Gastrocnemius medialis (tissue), 4 donors: ENCODE measurements at regions of chr4 and their contacts with region 1.

Region 1: DNA sequence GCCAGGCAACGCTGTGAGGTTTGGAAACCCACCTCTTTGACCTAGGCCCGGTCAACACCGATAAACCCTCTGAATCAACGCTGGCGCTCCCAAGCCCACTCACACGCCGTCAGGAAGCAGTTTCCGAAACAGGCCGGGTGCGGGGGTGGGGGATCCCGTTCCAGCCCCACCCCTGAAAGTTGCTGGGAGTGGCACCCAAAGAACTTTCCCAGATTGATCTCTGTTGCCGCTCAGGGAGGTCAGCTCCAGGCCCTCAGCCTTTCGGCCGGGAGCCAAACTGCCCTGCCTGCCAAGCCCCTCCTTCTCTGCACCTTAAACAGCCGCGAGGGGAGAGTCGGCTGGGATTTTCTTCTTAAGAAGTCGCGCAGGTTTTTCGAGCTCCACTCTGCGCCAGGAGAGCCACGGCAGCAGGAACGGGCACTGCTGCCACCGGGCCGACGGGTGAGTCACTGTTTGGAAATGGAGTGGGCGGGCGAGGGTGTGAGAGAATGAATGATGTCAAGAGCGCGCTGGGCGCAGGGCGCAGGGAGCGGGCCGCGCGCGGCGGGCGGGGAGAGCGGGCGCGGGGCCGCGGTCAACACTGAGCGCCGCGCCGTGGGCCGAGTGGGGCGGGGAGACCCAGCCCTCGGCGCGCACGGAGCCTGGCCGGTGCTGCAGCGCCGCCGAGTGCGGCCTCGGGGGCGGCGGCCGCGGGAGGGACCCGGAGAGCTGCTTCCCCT is at the start of gene SGMS2:
- DNase-seq: peak; percentile 72 to 84
- ATAC-seq: peak; percentile 90 to 91
- H3K4me3 ChIP-seq: peak within 1 kb of the TSS; percentile 73 to 87 (median 84)
- H3K27ac ChIP-seq: peak within 1 kb of the TSS; percentile 91 to 94 (median 93)
- H3K4me1 ChIP-seq: peaks cover 17 to 22% of the 10 kb centered on the region in 2 donors
- H3K27me3 ChIP-seq: no peaks in the 10 kb centered on the region
- CTCF ChIP-seq: no peak
- POLR2A ChIP-seq: peak; percentile 71 to 73
- total RNA-seq, gene SGMS2: 10.2 to 79.1 (median 23.8) TPM

Region 2: GRCh38 chr4:107757864-107758476 is 66.5 kb before region 1 on chr4:
- in situ Hi-C with region 1: no loop called
- intact Hi-C with region 1: loop called (anchors 5 kb)
- DNase-seq: no peak
- ATAC-seq: peak in 1 of 2 donors; percentile 65
- H3K4me3 ChIP-seq: no peak overlapping the region
- H3K27ac ChIP-seq: no peak overlapping the region
- H3K4me1 ChIP-seq: no peaks in the 10 kb centered on the region
- H3K27me3 ChIP-seq: no peaks in the 10 kb centered on the region
- CTCF ChIP-seq: peak; percentile 54 to 74 (median 61)
- POLR2A ChIP-seq: no peak

Region 3: DNA sequence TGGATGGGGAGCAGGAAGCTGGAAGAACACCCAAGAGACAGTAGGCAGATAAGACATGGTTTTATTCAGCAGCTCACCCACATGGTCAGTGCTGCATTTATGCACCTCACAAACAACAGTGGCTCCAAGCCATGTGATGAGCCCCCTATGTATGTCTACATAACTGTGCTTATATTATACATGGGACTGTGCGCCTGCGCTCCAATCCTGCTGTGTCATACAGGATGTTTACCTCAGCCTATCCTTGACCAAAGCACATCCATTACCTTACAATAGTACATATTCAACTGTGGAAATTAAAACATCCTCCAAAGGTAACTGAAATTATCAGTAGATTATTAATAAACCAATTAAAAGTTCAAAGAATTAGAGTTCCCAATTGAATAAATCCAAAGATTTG is 43.8 kb before region 1 on chr4:
- in situ Hi-C with region 1: no loop called
- intact Hi-C with region 1: no loop called
- DNase-seq: no peak
- ATAC-seq: no peak
- H3K4me3 ChIP-seq: no peak overlapping the region
- H3K27ac ChIP-seq: no peak overlapping the region
- H3K4me1 ChIP-seq: no peaks in the 10 kb centered on the region
- H3K27me3 ChIP-seq: no peaks in the 10 kb centered on the region
- CTCF ChIP-seq: no peak
- POLR2A ChIP-seq: no peak

Region 4: GRCh38 chr4:107863850-107864371 is 39.4 kb after region 1 on chr4:
- in situ Hi-C with region 1: no loop called
- intact Hi-C with region 1: loop called (anchors 1 kb)
- DNase-seq: no peak
- ATAC-seq: no peak
- H3K4me3 ChIP-seq: no peak overlapping the region
- H3K27ac ChIP-seq: no peak overlapping the region
- H3K4me1 ChIP-seq: peaks cover 0 to 9% of the 10 kb centered on the region in 2 donors
- H3K27me3 ChIP-seq: no peaks in the 10 kb centered on the region
- CTCF ChIP-seq: no peak
- POLR2A ChIP-seq: no peak

Region 5: GRCh38 chr4:107913281-107913899 is 88.9 kb after region 1 on chr4:
- in situ Hi-C with region 1: no loop called
- intact Hi-C with region 1: loop called (anchors 2 kb)
- DNase-seq: peak in 1 of 2 donors; percentile 19
- ATAC-seq: peak; percentile 80 to 93
- H3K4me3 ChIP-seq: no peak overlapping the region
- H3K27ac ChIP-seq: no peak overlapping the region
- H3K4me1 ChIP-seq: no peaks in the 10 kb centered on the region
- H3K27me3 ChIP-seq: no peaks in the 10 kb centered on the region
- CTCF ChIP-seq: peak; percentile 75 to 85 (median 81)
- POLR2A ChIP-seq: no peak

Region 6: DNA sequence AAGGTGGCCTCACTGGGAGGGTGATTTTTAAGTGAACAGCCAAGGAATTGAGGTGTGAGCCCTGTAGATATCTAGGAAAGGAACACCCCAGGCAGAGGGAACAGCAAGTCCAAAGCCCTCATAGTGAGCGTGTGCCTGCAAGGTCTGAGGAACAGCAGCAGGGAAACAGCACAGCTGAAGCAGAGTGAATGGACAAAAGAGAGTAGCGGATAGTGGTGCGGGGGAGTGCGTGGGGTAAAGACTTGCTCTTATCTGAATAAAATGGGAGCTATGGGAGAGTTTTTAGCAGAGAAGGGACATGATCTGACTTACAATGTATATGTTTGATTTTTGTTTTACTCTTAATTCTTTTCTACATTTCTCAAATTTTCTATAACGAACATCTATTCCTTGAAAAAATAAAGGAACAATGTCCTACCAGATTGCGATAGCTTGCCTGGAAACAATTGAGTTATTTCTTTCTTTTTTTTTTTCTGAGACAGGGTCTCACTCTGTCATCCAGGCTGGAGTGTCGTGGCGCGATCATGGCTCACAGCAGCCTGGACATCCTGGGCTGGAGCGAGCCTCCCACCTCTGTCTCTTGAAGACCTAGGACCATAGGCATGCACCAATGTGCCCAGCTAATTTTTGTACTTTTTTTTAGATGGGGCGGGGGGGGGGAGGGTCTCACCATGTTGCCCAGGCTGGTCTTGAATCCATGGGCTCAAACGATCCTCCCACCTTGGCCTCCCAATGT is 145.7 kb after region 1 on chr4:
- in situ Hi-C with region 1: no loop called
- intact Hi-C with region 1: no loop called
- DNase-seq: no peak
- ATAC-seq: no peak
- H3K4me3 ChIP-seq: no peak overlapping the region
- H3K27ac ChIP-seq: no peak overlapping the region
- H3K4me1 ChIP-seq: no peaks in the 10 kb centered on the region
- H3K27me3 ChIP-seq: no peaks in the 10 kb centered on the region
- CTCF ChIP-seq: no peak
- POLR2A ChIP-seq: no peak

Region 7: DNA sequence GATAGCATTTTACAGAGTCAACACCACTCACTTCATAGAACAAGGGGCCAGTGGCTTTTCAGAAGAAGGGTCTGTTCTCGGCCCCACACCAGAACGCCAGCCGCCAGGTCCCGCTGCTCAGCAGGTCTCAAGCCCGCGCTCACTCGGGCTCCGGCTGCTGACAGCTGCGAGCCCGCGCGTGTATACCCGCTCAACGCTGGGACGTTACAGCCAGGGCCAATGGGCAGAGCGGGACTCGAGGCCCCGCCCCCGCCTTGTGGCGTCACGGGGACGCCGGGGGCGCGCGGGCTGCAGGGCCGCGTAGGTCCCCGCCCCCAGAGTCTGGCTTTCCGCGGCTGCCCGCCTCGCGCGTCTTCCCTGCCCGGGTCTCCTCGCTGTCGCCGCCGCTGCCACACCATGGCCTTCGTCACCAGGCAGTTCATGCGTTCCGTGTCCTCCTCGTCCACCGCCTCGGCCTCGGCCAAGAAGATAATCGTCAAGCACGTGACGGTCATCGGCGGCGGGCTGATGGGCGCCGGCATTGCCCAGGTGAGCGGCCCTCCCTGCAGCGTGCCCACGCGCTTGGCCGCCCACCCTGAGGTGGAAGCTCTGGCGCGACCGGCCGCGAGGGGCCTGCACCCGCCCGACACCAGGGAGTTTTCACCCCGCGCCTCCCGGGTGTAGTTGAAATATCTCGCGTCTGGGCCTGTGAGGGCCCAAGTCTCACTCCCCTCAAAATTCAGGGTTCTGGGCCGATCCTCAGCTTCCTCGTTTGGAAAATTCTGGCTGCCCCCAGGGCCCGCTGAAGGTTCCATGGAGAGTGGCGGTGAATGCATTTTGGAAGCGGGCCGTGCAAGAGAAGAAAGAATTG is 165.2 kb after region 1 on chr4 and contains the start of gene HADH:
- in situ Hi-C with region 1: no loop called
- intact Hi-C with region 1: loop called (anchors 5 kb)
- DNase-seq: peak; percentile 92 to 96
- ATAC-seq: peak; percentile 86 to 87
- H3K4me3 ChIP-seq: peak within 1 kb of the TSS; percentile 76 to 91 (median 90)
- H3K27ac ChIP-seq: peak within 1 kb of the TSS; percentile 92 to 99 (median 96)
- H3K4me1 ChIP-seq: peaks cover 38 to 47% of the 10 kb centered on the region in 2 donors
- H3K27me3 ChIP-seq: no peaks in the 10 kb centered on the region
- CTCF ChIP-seq: no peak
- POLR2A ChIP-seq: peak; percentile 99
- total RNA-seq, gene HADH: 78.0 to 137 (median 105) TPM

Region 8: DNA sequence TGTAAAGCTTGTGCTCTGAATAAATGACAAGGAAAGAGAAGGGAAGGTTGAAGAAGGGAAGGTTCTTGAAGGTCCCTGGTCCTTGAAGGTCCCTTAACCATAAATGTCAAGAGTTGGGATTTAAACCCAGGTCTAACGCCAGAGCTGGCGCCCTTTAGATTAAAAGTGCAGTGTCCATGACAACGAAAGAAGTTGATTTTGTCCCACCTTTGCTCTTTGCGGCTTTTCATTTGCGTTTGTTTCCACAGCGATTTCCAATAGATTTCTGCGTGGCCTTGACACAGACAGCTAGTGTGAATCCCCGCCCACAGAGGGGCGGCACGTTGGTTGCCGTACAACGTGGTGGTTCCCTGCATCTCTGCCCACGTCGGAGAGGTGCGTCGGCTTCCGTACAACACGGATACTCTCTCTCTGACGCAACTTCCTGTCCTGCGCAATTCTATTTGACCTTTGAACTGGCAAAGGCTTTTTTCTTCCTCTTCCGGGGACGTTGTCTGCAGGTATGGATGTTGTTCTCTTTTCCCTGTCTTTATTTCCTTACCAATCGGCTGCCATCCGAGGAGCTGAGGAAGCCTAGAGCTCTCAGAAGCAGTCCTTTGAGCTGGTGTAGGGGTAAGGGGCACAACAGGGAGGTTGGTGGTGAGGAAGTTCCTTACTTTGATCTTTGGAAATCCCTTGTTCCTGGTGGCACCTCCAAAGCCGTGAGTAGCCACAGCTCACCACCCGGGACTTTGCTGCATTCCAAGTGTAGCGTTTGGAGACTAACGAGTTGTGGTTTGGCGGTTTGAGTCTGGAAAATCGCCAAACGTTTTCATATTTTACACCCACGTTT is 795.8 kb after region 1 on chr4 and contains the start of gene RPL34:
- in situ Hi-C with region 1: no loop called
- intact Hi-C with region 1: loop called (anchors 10 kb)
- DNase-seq: peak; percentile 95 to 97
- ATAC-seq: peak; percentile 99
- H3K4me3 ChIP-seq: peak within 1 kb of the TSS; percentile 75 to 87 (median 79)
- H3K27ac ChIP-seq: peak within 1 kb of the TSS; percentile 78 to 87 (median 83)
- H3K4me1 ChIP-seq: peaks cover 19 to 21% of the 10 kb centered on the region in 2 donors
- H3K27me3 ChIP-seq: no peaks in the 10 kb centered on the region
- CTCF ChIP-seq: no peak
- POLR2A ChIP-seq: peak; percentile 93 to 94
- total RNA-seq, gene RPL34: 419 to 608 (median 540) TPM